ENCODE measurements at regions of chr16 and their contacts with region 1.

Region 1: DNA sequence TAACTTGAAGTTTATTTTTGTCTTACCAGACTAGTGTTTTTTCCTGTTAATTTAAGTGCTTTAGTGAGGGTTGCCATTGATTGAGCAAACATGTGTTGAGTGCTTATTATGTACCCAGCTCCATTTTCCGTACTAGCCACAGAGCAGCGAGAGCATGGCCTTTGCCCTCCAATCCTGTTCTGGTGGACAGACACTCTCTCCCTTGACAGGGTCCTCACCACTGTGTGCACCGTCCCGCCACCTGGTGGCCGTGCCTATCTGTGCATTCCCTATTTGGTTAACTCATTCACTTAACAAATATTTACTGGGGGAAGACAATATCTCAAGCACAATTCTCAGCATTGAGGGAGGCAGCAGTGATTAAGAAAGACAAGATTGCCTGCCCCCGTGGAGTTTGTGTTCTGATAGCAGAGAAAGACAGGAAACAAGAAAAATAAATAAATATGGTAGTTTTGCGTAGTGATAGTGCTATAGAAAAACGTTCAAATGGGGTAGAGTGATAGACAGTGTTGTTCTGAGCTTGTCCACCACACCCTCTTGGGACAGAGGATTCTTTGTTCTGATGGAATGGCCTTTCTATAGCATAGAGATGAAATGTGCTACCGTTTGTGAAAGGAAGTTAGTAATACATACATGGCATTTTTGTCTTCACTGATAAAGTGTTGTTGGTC is 13.0 kb downstream of the CDH13 start:
- DNase-seq: peak; percentile 71
- ATAC-seq: peak; percentile 73
- H3K4me3 Mint-ChIP-seq: no peak overlapping the region
- H3K27ac Mint-ChIP-seq: no peak overlapping the region
- H3K4me1 Mint-ChIP-seq: peaks cover 61% of the 10 kb centered on the region
- H3K27me3 Mint-ChIP-seq: no peaks in the 10 kb centered on the region

Region 2: DNA sequence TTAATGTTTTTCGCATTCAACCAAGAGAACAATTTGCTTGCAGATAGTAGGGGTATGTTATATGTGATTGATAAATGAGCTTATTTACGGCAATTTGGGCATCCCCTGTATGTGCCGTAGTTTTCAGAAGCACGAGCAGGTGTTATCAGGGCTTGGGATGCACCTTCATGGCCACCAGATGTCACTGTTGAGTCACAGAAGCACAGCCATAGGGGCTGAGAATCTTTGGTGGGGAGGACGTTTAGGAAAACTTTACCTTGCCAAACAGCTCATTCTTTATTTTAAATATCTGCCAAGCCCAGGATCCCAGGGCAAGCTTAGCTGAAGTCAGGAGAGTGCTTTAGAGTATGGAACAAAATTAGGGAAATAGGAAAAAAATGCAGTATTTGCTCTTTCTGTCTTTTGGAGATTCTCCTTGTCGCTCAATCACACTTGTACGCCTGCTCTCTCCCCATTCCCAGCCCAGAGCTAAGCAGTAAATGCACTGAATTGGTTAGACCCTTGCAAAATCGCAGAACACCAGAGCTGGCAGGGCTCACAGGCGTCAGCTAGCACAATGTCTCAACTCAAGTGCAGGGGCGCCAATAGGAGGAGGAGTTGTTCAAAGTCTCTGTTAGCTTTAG is 376.2 kb before region 1 on chr16:
- CTCF ChIA-PET with region 1: interaction called, 10 read pairs
- POLR2A ChIA-PET with region 1: no interaction called
- DNase-seq: peak; percentile 69
- ATAC-seq: peak; percentile 87
- H3K4me3 Mint-ChIP-seq: no peak overlapping the region
- H3K27ac Mint-ChIP-seq: no peak overlapping the region
- H3K4me1 Mint-ChIP-seq: no peaks in the 10 kb centered on the region
- H3K27me3 Mint-ChIP-seq: peaks cover 6% of the 10 kb centered on the region

Region 3: GRCh38 chr16:82653550-82654511 is 14.0 kb after region 1 on chr16:
- CTCF ChIA-PET with region 1: interaction called, 98 read pairs
- POLR2A ChIA-PET with region 1: interaction called, 8 read pairs
- DNase-seq: peak; percentile 67
- ATAC-seq: peak; percentile 51
- H3K4me3 Mint-ChIP-seq: peak overlapping the region; percentile 44
- H3K27ac Mint-ChIP-seq: peak overlapping the region; percentile 98
- H3K4me1 Mint-ChIP-seq: peaks cover 96% of the 10 kb centered on the region
- H3K27me3 Mint-ChIP-seq: no peaks in the 10 kb centered on the region

Region 4: GRCh38 chr16:82671741-82672140 is 31.9 kb after region 1 on chr16:
- CTCF ChIA-PET with region 1: interaction called, 42 read pairs
- POLR2A ChIA-PET with region 1: no interaction called
- DNase-seq: no peak
- ATAC-seq: no peak
- H3K4me3 Mint-ChIP-seq: no peak overlapping the region
- H3K27ac Mint-ChIP-seq: no peak overlapping the region
- H3K4me1 Mint-ChIP-seq: peaks cover 4% of the 10 kb centered on the region
- H3K27me3 Mint-ChIP-seq: peaks cover 18% of the 10 kb centered on the region

Region 5: GRCh38 chr16:82730901-82731300 is 91.1 kb after region 1 on chr16:
- CTCF ChIA-PET with region 1: interaction called, 13 read pairs
- POLR2A ChIA-PET with region 1: no interaction called
- DNase-seq: no peak
- ATAC-seq: no peak
- H3K4me3 Mint-ChIP-seq: no peak overlapping the region
- H3K27ac Mint-ChIP-seq: no peak overlapping the region
- H3K4me1 Mint-ChIP-seq: peaks cover 17% of the 10 kb centered on the region
- H3K27me3 Mint-ChIP-seq: peaks cover 7% of the 10 kb centered on the region

Region 6: DNA sequence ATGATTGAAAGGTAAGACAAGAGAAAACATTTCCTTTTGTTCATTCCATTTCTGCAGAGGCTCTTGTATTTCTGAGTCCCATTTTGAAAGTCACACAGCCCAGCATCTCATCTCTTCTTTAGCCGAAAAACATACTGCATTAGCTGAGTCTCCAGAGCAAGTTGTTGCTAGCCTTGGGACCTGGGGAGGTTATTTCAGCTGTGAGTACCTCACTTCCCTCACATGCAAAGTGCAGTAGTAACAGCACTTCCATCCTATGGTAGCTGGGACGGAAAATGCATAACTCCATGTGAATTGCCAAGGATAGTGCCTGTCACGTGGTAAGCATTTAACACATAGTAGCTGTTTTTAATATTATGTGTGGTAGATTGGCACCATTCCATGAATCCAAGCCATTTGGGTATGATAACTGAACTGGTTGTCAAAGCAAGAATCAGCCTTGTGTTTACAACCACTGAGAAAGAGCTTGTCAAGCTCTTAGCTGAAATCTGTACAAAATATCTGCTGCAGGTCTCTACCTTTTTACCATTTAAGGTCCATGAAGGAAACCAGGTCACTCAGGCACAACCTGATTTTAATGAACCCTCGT is 332.6 kb after region 1 on chr16:
- CTCF ChIA-PET with region 1: no interaction called
- POLR2A ChIA-PET with region 1: no interaction called
- DNase-seq: no peak
- ATAC-seq: no peak
- H3K4me3 Mint-ChIP-seq: no peak overlapping the region
- H3K27ac Mint-ChIP-seq: no peak overlapping the region
- H3K4me1 Mint-ChIP-seq: no peaks in the 10 kb centered on the region
- H3K27me3 Mint-ChIP-seq: peaks cover 5% of the 10 kb centered on the region